Activated CD4-positive, alpha-beta T cell treated with anti-CD3 and anti-CD28 coated beads for 36 hours (primary cell): ENCODE measurements at regions of chr1 and their contacts with region 1.

Region 1: GRCh38 chr1:215526553-215527151 is 40.5 kb upstream of the KCTD3 start:
- DNase-seq: no peak
- ATAC-seq: peak; percentile 33
- H3K4me3 Mint-ChIP-seq: no peak overlapping the region
- H3K27ac Mint-ChIP-seq: no peak overlapping the region
- H3K4me1 Mint-ChIP-seq: no peaks in the 10 kb centered on the region
- H3K27me3 Mint-ChIP-seq: peaks cover 19% of the 10 kb centered on the region

Region 2: GRCh38 chr1:214213136-214213535 is 1313.5 kb before region 1 on chr1:
- CTCF ChIA-PET with region 1: no interaction called
- POLR2A ChIA-PET with region 1: no interaction called
- intact Hi-C with region 1: loop called (anchors 5 to 10 kb)
- DNase-seq: no peak
- ATAC-seq: no peak
- H3K4me3 Mint-ChIP-seq: no peak overlapping the region
- H3K27ac Mint-ChIP-seq: no peak overlapping the region
- H3K4me1 Mint-ChIP-seq: peaks cover 4% of the 10 kb centered on the region
- H3K27me3 Mint-ChIP-seq: peaks cover 13% of the 10 kb centered on the region

Region 3: DNA sequence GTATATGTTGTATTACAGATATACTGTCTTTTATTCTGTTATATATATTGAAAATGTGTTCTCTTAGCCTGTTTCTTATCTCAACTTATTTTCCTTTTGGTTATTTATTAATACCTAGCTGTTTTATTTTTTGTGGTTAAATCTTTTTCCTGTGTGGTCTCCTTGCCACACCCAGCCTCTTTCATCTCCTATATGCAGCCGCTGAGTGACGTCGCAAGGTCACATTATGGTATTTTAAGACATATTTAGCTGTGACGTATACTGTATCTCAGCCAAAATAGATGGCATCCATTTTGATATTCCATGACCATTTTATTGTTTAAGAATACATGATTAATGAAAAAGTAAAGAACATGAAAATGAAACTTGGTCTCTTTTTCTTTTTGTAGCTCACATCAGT is 894.6 kb before region 1 on chr1:
- CTCF ChIA-PET with region 1: interaction called, 6 read pairs
- POLR2A ChIA-PET with region 1: no interaction called
- intact Hi-C with region 1: loop called (anchors 1 to 2 kb)
- DNase-seq: peak; percentile 21
- ATAC-seq: peak; percentile 52
- H3K4me3 Mint-ChIP-seq: no peak overlapping the region
- H3K27ac Mint-ChIP-seq: no peak overlapping the region
- H3K4me1 Mint-ChIP-seq: peaks cover 22% of the 10 kb centered on the region
- H3K27me3 Mint-ChIP-seq: no peaks in the 10 kb centered on the region

Region 4: GRCh38 chr1:214660862-214661261 is 865.8 kb before region 1 on chr1:
- CTCF ChIA-PET with region 1: no interaction called
- POLR2A ChIA-PET with region 1: no interaction called
- intact Hi-C with region 1: loop called in 1 of 2 experiments (anchors 10 kb)
- DNase-seq: peak; percentile 45
- ATAC-seq: no peak
- H3K4me3 Mint-ChIP-seq: no peak overlapping the region
- H3K27ac Mint-ChIP-seq: no peak overlapping the region
- H3K4me1 Mint-ChIP-seq: peaks cover 2% of the 10 kb centered on the region
- H3K27me3 Mint-ChIP-seq: no peaks in the 10 kb centered on the region

Region 5: DNA sequence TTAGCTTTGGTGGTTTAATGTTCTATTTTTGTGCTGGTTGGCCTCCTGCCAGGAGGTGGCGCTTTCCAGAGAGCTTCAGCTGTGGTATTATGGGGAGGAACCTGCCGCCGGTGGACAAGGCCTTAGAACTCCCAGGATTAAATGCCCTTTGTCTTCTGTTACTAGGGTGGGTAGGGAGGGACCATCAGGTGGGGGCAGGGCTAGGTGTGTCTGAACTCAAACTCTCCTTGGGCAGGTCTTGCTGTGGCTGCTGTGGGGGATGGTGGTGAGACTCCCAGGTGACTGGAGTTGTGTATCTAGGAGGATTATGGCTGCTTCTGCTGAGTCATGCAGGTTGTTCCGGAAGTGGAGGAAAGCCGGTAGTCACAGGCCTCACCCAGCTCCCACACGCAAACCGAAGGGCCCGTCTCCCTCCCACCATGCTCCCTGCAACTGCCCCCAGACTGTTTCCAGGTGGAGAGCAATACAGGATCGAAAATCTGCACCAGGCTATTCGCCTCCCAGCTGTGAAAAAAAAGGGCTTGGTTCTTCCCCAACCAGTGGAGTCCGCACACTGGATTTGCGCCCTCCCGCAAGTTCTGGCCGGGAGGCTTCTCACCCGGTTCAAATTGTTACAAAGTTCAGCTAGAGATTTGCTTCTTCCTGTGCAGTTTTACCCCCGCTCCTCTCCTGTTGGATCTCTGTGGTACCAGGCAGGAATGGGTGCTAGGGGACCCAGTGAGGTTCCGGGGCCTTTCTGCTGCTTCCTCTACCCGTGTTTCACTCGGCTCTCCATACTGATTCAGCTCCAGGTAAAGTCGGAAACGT is 703.1 kb before region 1 on chr1:
- CTCF ChIA-PET with region 1: no interaction called
- POLR2A ChIA-PET with region 1: no interaction called
- intact Hi-C with region 1: loop called in 1 of 2 experiments (anchors 10 kb)
- DNase-seq: peak; percentile 40
- ATAC-seq: no peak
- H3K4me3 Mint-ChIP-seq: no peak overlapping the region
- H3K27ac Mint-ChIP-seq: no peak overlapping the region
- H3K4me1 Mint-ChIP-seq: no peaks in the 10 kb centered on the region
- H3K27me3 Mint-ChIP-seq: peaks cover 2% of the 10 kb centered on the region